ENCODE measurements at regions of chr13 and their contacts with region 1.

Region 1: DNA sequence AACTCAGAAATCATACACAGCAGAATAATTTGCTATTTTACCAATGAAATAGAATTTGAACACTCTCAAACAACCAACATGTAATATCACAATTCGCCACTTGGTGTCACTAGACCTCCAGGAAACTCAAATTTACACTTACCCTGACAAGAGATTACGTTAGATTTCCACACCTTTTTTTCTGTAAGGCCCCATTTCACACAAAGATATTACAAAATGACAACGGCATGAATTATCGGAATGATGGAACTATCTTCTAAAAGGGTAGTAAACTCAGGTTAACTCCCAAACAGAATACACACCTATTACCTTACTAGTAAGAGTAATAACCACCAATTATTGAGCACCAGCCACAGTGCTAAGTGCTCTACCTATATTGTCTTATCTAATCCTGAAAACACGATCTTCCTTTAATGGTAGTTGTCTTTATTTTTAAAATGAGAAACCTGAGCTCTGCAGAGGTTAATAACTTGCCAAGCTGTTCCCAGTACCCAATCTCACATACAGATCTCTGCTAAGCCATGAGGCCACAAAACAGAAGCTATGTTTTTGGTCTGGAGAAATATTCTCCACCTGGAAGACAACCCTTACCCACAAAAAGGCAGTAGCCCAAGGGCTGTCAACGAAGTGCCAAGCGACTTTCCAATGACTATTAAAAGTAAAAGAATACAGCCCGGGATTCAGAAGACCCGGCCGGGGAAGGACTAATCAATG is 152.4 kb downstream of the DCLK1 start:
- DNase-seq: peak; percentile 49
- H3K4me3 ChIP-seq: no peak overlapping the region
- H3K27ac ChIP-seq: peak overlapping the region; percentile 14
- H3K4me1 ChIP-seq: peaks cover 13% of the 10 kb centered on the region
- H3K27me3 ChIP-seq: no peaks in the 10 kb centered on the region
- CTCF ChIP-seq: peak; percentile 60 to 71

Region 2: GRCh38 chr13:35888457-35888883 is 90.3 kb before region 1 on chr13:
- CTCF ChIA-PET with region 1: no interaction called
- dilution Hi-C with region 1: no loop called
- in situ Hi-C with region 1: no loop called
- intact Hi-C with region 1: no loop called
- DNase-seq: no peak
- H3K4me3 ChIP-seq: no peak overlapping the region
- H3K27ac ChIP-seq: no peak overlapping the region
- H3K4me1 ChIP-seq: peaks cover 21% of the 10 kb centered on the region
- H3K27me3 ChIP-seq: no peaks in the 10 kb centered on the region
- CTCF ChIP-seq: no peak

Region 3: GRCh38 chr13:36088014-36088413 is 109.3 kb after region 1 on chr13:
- CTCF ChIA-PET with region 1: no interaction called
- dilution Hi-C with region 1: no loop called
- in situ Hi-C with region 1: no loop called
- intact Hi-C with region 1: loop called (anchors 2 kb)
- DNase-seq: peak; percentile 42
- H3K4me3 ChIP-seq: no peak overlapping the region
- H3K27ac ChIP-seq: no peak overlapping the region
- H3K4me1 ChIP-seq: no peaks in the 10 kb centered on the region
- H3K27me3 ChIP-seq: no peaks in the 10 kb centered on the region
- CTCF ChIP-seq: peak in 1 of 2 donors; percentile 34

Region 4: GRCh38 chr13:36131931-36132297 is 153.2 kb after region 1 on chr13:
- CTCF ChIA-PET with region 1: no interaction called
- dilution Hi-C with region 1: no loop called
- in situ Hi-C with region 1: no loop called
- intact Hi-C with region 1: no loop called
- DNase-seq: no peak
- H3K4me3 ChIP-seq: no peak overlapping the region
- H3K27ac ChIP-seq: no peak overlapping the region
- H3K4me1 ChIP-seq: peaks cover 10% of the 10 kb centered on the region
- H3K27me3 ChIP-seq: peaks cover 24% of the 10 kb centered on the region
- CTCF ChIP-seq: no peak

Region 5: DNA sequence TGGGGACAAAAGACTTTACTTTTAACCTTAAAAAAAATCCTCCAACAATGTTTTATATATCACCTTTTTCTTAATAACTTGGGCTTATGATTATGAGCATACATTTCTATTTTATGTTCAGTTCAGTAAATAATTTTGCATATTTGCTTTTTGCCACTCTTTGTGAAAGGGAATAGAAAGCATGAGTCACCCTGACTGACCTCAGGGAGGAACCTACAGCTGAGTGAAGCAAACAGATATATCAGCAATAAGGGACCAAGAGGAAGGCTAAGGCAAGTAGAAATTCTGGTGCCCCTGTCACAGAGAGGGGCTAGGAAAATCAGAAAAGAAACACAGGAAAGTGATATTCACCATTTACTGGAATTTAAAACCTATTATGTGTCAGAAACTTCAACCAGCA is 272.8 kb after region 1 on chr13:
- CTCF ChIA-PET with region 1: no interaction called
- dilution Hi-C with region 1: loop called (anchors 25 kb)
- in situ Hi-C with region 1: no loop called
- intact Hi-C with region 1: no loop called
- DNase-seq: no peak
- H3K4me3 ChIP-seq: no peak overlapping the region
- H3K27ac ChIP-seq: no peak overlapping the region
- H3K4me1 ChIP-seq: no peaks in the 10 kb centered on the region
- H3K27me3 ChIP-seq: no peaks in the 10 kb centered on the region
- CTCF ChIP-seq: no peak

Region 6: GRCh38 chr13:36275190-36276002 is 296.6 kb after region 1 on chr13:
- CTCF ChIA-PET with region 1: interaction called, 22 read pairs
- dilution Hi-C with region 1: loop called (anchors 25 kb)
- in situ Hi-C with region 1: loop called in 1 of 2 experiments (anchors 5 kb)
- intact Hi-C with region 1: loop called (anchors 1 kb)
- DNase-seq: no peak
- H3K4me3 ChIP-seq: no peak overlapping the region
- H3K27ac ChIP-seq: no peak overlapping the region
- H3K4me1 ChIP-seq: no peaks in the 10 kb centered on the region
- H3K27me3 ChIP-seq: no peaks in the 10 kb centered on the region
- CTCF ChIP-seq: peak; percentile 54 to 63

Region 7: DNA sequence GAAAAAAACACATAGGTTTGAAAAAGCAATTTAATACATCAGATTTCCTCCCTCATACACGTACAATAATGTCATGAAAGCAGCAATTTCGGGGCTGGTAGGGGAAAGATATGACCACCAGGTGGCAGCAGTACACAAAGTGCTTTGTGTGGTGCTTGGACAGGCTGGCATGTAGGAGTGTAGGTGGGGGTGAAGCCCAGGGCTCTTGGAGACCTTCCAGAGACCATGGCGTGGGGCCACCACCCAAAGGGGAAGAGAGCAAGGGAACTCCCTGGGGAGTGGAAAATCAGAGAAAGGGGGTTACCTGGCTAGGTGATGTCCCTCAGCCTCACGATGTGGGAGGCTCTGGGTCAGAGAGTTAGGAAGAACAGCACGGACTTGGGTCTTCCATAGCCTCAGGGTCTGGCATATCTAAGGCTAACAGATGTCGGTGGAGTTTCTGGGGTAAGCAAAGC is 441.7 kb after region 1 on chr13:
- CTCF ChIA-PET with region 1: no interaction called
- dilution Hi-C with region 1: no loop called
- in situ Hi-C with region 1: loop called in 1 of 2 experiments (anchors 25 kb)
- intact Hi-C with region 1: loop called (anchors 1 kb)
- DNase-seq: peak; percentile 62
- H3K4me3 ChIP-seq: no peak overlapping the region
- H3K27ac ChIP-seq: no peak overlapping the region
- H3K4me1 ChIP-seq: peaks cover 35% of the 10 kb centered on the region
- H3K27me3 ChIP-seq: no peaks in the 10 kb centered on the region
- CTCF ChIP-seq: peak; percentile 89 to 94

Measured in mammary epithelial cell (primary cell).